Caco-2 (cell line): ENCODE measurements at regions of chr11 and their contacts with region 1.

Region 1: GRCh38 chr11:85941380-85941973 is 86.3 kb downstream of the CCDC83 start:
- DNase-seq: peak; percentile 75 to 78
- H3K4me3 ChIP-seq: no peak overlapping the region
- H3K4me3 Mint-ChIP-seq: no peak overlapping the region
- H3K27ac Mint-ChIP-seq: no peak overlapping the region
- H3K4me1 ChIP-seq: no peaks in the 10 kb centered on the region
- H3K4me1 Mint-ChIP-seq: peaks cover 6% of the 10 kb centered on the region
- H3K27me3 ChIP-seq: no peaks in the 10 kb centered on the region
- H3K27me3 Mint-ChIP-seq: no peaks in the 10 kb centered on the region
- CTCF ChIP-seq: peak; percentile 80 to 81

Region 2: GRCh38 chr11:85977751-85978160 is 36.3 kb after region 1 on chr11:
- CTCF ChIA-PET with region 1: no interaction called
- POLR2A ChIA-PET with region 1: no interaction called
- intact Hi-C with region 1: no loop called
- DNase-seq: no peak
- H3K4me3 ChIP-seq: no peak overlapping the region
- H3K4me3 Mint-ChIP-seq: no peak overlapping the region
- H3K27ac Mint-ChIP-seq: no peak overlapping the region
- H3K4me1 ChIP-seq: no peaks in the 10 kb centered on the region
- H3K4me1 Mint-ChIP-seq: no peaks in the 10 kb centered on the region
- H3K27me3 ChIP-seq: no peaks in the 10 kb centered on the region
- H3K27me3 Mint-ChIP-seq: no peaks in the 10 kb centered on the region
- CTCF ChIP-seq: no peak

Region 3: DNA sequence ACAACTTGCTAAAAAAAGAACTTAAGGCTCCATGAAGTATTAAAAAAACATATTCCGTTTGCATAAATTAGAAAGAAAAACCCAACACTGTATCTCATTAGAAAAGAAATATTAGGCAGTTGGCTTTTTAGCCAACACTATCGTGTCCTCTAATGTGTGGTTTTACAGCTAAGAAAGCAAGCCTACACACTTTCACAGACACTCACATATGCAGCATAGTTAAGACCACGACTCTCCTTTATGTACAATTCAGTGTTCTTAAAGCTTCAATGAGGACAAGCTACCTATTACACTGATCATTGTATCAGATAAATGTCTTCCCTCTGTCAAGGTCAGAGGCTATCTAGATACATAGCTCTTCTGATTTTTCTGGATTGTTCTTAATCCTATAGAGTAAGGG is 47.3 kb after region 1 on chr11:
- CTCF ChIA-PET with region 1: no interaction called
- POLR2A ChIA-PET with region 1: no interaction called
- intact Hi-C with region 1: no loop called
- DNase-seq: no peak
- H3K4me3 ChIP-seq: no peak overlapping the region
- H3K4me3 Mint-ChIP-seq: no peak overlapping the region
- H3K27ac Mint-ChIP-seq: no peak overlapping the region
- H3K4me1 ChIP-seq: no peaks in the 10 kb centered on the region
- H3K4me1 Mint-ChIP-seq: no peaks in the 10 kb centered on the region
- H3K27me3 ChIP-seq: no peaks in the 10 kb centered on the region
- H3K27me3 Mint-ChIP-seq: no peaks in the 10 kb centered on the region
- CTCF ChIP-seq: no peak

Region 4: GRCh38 chr11:86218125-86219084 is 276.9 kb after region 1 on chr11:
- CTCF ChIA-PET with region 1: interaction called, 5 read pairs
- POLR2A ChIA-PET with region 1: no interaction called
- intact Hi-C with region 1: loop called (anchors 1 kb)
- DNase-seq: peak; percentile 74 to 88
- H3K4me3 ChIP-seq: no peak overlapping the region
- H3K4me3 Mint-ChIP-seq: peak overlapping the region; percentile 15
- H3K27ac Mint-ChIP-seq: peak overlapping the region; percentile 25
- H3K4me1 ChIP-seq: peaks cover 12% of the 10 kb centered on the region
- H3K4me1 Mint-ChIP-seq: peaks cover 22% of the 10 kb centered on the region
- H3K27me3 ChIP-seq: no peaks in the 10 kb centered on the region
- H3K27me3 Mint-ChIP-seq: no peaks in the 10 kb centered on the region
- CTCF ChIP-seq: peak; percentile 98

Region 5: GRCh38 chr11:86230921-86231430 is 289.5 kb after region 1 on chr11:
- CTCF ChIA-PET with region 1: interaction called, 5 read pairs
- POLR2A ChIA-PET with region 1: no interaction called
- intact Hi-C with region 1: loop called (anchors 2 kb)
- DNase-seq: no peak
- H3K4me3 ChIP-seq: no peak overlapping the region
- H3K4me3 Mint-ChIP-seq: no peak overlapping the region
- H3K27ac Mint-ChIP-seq: no peak overlapping the region
- H3K4me1 ChIP-seq: peaks cover 13% of the 10 kb centered on the region
- H3K4me1 Mint-ChIP-seq: peaks cover 24% of the 10 kb centered on the region
- H3K27me3 ChIP-seq: no peaks in the 10 kb centered on the region
- H3K27me3 Mint-ChIP-seq: no peaks in the 10 kb centered on the region
- CTCF ChIP-seq: no peak

Region 6: GRCh38 chr11:86291466-86292262 is 350.2 kb after region 1 on chr11:
- CTCF ChIA-PET with region 1: no interaction called
- POLR2A ChIA-PET with region 1: no interaction called
- intact Hi-C with region 1: loop called (anchors 1 kb)
- DNase-seq: peak; percentile 63 to 82
- H3K4me3 ChIP-seq: no peak overlapping the region
- H3K4me3 Mint-ChIP-seq: no peak overlapping the region
- H3K27ac Mint-ChIP-seq: no peak overlapping the region
- H3K4me1 ChIP-seq: 0 out of 2 replicates have a peak, but pooled peaks cover 4% of the 10 kb centered on the region
- H3K4me1 Mint-ChIP-seq: no peaks in the 10 kb centered on the region
- H3K27me3 ChIP-seq: no peaks in the 10 kb centered on the region
- H3K27me3 Mint-ChIP-seq: no peaks in the 10 kb centered on the region
- CTCF ChIP-seq: peak; percentile 92 to 98

Region 7: GRCh38 chr11:86418917-86419316 is 477.4 kb after region 1 on chr11:
- CTCF ChIA-PET with region 1: no interaction called
- POLR2A ChIA-PET with region 1: no interaction called
- intact Hi-C with region 1: loop called (anchors 1 kb)
- DNase-seq: peak in 1 of 2 experiments; percentile 46
- H3K4me3 ChIP-seq: no peak overlapping the region
- H3K4me3 Mint-ChIP-seq: no peak overlapping the region
- H3K27ac Mint-ChIP-seq: no peak overlapping the region
- H3K4me1 ChIP-seq: peaks cover 19% of the 10 kb centered on the region
- H3K4me1 Mint-ChIP-seq: peaks cover 33% of the 10 kb centered on the region
- H3K27me3 ChIP-seq: no peaks in the 10 kb centered on the region
- H3K27me3 Mint-ChIP-seq: no peaks in the 10 kb centered on the region
- CTCF ChIP-seq: peak; percentile 31 to 61